T-cell (primary cell): ENCODE measurements at regions of chr2 and their contacts with region 1.

Region 1: DNA sequence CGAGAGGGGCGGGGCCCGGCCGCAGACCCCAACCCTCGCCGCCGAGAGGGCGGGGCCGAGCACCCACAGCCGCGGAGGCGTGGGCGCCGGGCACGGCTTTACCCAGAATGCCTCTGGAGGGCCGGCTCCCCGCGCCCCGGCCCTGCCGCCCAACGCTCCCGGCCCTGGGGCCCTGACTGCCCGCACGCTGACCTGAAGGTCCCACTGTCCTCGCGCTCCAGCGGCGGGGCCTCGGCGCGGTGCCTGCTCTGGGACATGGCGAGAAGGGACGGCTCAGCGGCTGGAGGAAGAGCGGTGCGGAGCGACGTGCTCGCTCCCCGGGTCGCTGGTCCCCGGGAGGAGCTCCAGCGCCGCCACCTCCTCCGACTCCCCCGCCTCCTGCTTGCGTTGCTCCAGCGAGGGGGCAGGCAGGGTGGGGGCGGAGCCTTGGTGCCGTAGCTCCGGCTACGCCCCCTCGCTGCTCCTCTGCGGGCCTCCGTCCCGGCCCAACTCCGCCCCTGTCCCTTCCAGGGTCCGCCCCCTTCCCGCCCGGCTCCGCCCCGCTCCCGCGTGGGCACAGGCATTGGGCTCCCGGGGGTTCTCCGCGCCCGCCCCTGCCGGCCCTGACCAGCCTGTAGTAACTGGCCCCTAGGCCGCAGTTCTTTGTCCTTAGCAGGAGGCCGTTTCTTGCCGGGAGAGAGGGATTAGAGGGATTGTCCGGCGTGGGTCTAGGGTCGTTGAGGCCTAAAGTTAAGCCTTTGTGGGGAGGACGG is at the starts of genes PJVK and PRKRA:
- DNase-seq: peak; percentile 88 to 97 (median 92)
- ATAC-seq: peak; percentile 84 to 95 (median 90)
- H3K4me3 ChIP-seq: peak within 1 kb of the TSS; percentile 80 to 95
- H3K4me3 Mint-ChIP-seq: peak within 1 kb of the TSS; percentile 86 to 88 (median 87)
- H3K27ac ChIP-seq: peak within 1 kb of the TSS; percentile 91
- H3K27ac Mint-ChIP-seq: peak within 1 kb of the TSS; percentile 86 to 91
- H3K4me1 ChIP-seq: peaks cover 10 to 27% of the 10 kb centered on the region in 2 experiments
- H3K4me1 Mint-ChIP-seq: peaks cover 25 to 33% (median 32%) of the 10 kb centered on the region in 3 donors
- H3K27me3 ChIP-seq: no peaks in the 10 kb centered on the region
- H3K27me3 Mint-ChIP-seq: no peaks in the 10 kb centered on the region
- total RNA-seq, gene PJVK: 1.8 to 5.2 (median 4.3) TPM
- total RNA-seq, gene PRKRA: 49.4 to 98.7 (median 52.7) TPM

Region 2: DNA sequence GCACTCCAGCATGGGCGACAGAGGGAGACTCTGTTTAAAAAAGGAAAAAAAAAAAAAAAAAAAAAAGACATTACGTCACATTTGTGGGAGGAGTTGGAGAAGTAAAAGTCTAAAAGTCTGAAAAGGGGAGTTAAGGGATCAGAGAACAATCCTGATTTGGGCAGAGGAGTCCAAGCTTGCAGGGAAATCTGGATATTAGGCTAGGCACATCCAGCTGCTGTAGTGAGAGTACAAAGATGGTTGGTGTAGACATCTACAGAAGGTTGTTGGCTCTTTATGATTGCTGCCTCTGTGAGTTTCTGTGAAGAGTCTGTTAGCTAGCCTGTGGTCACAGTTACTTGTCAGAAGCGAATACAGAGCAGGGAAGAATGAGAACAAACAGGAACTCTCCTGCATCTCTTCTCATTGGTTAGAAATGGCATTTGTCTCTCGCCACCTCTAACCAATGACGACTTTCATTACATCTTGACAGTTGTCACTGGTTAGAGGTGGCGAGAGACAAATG is 259.9 kb before region 1 on chr2:
- CTCF ChIA-PET with region 1: interaction called in 1 of 2 experiments, 10 read pairs
- POLR2A ChIA-PET with region 1: no interaction called
- DNase-seq: peak in 1 of 35 experiments; percentile 8
- ATAC-seq: peak in 3 of 4 experiments; percentile 18 to 65 (median 37)
- H3K4me3 ChIP-seq: no peak overlapping the region
- H3K4me3 Mint-ChIP-seq: peak overlapping the region; percentile 26 to 43 (median 32)
- H3K27ac ChIP-seq: no peak overlapping the region
- H3K27ac Mint-ChIP-seq: peak overlapping the region; percentile 9 to 25
- H3K4me1 ChIP-seq: peaks cover 7 to 15% of the 10 kb centered on the region in 2 experiments
- H3K4me1 Mint-ChIP-seq: peaks cover 0 to 18% (median 13%) of the 10 kb centered on the region in 3 donors
- H3K27me3 ChIP-seq: peaks cover 2 to 29% of the 10 kb centered on the region in 2 experiments
- H3K27me3 Mint-ChIP-seq: peaks cover 29 to 43% of the 10 kb centered on the region in 2 donors